Posterior cingulate gyrus (tissue), 11 donors: ENCODE measurements at regions of chr4 and their contacts with region 1.

Region 1: DNA sequence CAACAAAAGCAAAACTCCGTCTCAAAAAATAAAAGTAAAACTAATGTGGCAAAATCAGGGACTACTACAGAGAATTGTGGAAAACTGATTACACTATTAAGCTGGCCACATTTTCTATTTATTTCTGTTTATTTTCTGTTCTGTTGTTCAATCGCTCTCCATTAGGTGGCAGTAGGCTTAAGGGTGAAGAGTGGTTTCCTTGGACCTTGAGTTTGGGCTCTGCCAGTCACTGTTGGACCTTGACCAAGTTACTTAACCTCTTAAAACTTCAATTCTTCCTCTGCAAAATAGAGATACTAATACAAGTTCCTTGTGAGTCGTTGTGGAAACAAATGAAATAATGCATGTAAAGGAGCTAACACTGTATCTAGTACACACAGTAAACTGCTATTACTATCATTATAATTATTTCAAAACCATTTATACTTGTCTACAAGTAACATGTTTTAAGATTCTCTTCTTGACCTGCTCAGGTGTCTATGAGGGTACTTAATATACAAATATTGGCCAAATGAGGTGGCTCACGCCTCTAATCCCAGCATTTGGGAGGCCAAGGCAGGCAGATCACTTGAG is 15.2 kb downstream of the HSD17B11 start:
- DNase-seq: no peak

Region 2: GRCh38 chr4:87017580-87018342 is 358.0 kb before region 1 on chr4:
- intact Hi-C with region 1: no loop called
- DNase-seq: no peak

Region 3: DNA sequence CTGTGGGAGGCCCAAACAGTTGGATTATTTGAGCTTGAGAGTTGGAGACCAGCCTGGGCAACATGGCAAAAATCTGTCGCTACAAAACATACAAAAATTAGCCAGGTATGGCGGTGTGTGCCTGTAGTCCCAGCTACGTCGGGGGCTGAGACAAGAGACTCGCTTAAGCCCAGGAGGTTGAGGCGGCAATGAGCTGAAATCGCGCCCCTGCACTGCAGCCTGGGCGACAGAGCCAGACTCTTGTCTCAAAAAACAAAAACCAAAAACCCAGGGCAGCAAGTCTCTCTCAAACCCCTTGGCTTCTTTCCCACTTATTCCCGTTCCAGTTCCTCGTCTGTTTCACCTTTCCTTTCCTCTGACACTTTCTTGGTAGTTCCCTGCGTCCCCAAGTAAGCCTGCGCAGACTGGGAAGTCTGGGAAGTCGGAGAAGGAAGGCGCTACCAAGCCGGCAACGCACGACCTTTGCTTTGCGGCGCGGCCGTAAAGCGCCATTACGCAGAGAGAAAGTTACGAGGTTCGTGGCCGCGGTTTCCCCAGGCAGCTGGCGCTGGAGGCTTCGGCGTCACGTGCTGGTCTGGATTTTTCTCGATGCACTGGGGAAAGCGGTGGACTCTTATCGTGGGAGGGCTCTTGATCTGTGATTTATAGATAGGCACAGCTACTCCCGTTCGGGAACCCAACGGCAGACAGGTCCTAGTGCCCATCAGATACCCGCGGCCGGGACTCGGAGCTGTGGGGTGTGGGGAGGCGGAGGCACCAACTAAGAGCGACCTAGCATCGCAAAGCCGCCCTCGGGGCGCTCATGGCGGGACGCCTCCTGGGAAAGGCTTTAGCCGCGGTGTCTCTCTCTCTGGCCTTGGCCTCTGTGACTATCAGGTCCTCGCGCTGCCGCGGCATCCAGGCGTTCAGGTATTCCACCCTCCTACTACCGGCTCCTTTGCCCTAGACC is 46.6 kb after region 1 on chr4 and contains the start of gene NUDT9:
- intact Hi-C with region 1: loop called (anchors 5 kb)
- DNase-seq: peak; percentile 91 to 99 (median 94)

Region 4: DNA sequence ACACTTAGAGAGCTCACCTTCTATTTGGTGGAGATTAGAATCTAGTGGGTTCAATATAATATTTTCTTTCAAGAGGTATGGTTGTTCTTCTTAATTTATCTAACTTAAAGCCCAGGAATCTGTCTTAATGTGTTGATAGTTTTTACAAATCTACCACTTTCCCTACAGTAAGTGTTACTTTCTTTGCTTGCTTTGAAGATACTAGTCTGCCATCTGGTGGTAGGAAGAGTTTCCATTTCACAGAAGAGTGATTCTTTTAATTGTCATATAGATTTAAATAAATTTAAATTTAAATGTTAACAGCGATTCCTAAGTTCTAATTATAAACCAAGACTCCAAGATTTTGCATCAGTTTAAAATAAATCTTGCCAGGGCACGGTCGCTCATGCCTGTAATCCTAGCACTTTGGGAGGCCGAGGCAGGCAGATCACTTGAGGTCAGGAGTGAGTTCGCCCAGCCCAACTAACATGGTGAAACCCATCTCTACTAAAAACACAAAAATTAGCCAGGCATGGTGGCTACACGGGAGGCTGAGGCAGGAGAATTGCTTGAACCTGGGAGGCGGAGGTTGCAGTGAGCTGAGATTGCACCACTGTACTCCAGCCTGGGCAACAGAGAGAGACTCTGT is 90.0 kb after region 1 on chr4:
- intact Hi-C with region 1: loop called (anchors 1 kb)
- DNase-seq: no peak

Region 5: GRCh38 chr4:87965501-87965975 is 589.7 kb after region 1 on chr4:
- intact Hi-C with region 1: no loop called
- DNase-seq: peak in 1 of 10 donors; percentile 74

Region 6: DNA sequence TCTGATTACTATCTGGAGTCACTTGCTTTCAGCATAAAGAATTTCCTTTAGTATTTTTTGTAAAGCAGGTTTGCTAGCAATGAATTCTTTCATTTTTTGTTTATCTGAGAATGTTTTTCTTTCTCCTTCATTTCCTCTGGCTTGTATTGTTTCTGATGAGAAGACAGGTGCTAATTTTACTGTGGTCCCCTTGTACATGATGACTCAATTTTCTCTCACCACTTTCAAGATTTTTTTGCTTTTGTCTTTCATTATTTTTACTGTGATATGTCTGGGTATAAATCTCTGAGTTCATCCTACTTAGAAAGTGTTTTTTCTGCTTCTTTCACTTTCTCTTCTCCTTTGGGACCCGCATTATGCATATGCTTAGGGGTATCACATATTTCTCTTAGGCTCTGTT is 694.2 kb after region 1 on chr4:
- intact Hi-C with region 1: no loop called
- DNase-seq: no peak